IMR-90 (cell line): ENCODE measurements at regions of chr1 and their contacts with region 1.

Region 1: DNA sequence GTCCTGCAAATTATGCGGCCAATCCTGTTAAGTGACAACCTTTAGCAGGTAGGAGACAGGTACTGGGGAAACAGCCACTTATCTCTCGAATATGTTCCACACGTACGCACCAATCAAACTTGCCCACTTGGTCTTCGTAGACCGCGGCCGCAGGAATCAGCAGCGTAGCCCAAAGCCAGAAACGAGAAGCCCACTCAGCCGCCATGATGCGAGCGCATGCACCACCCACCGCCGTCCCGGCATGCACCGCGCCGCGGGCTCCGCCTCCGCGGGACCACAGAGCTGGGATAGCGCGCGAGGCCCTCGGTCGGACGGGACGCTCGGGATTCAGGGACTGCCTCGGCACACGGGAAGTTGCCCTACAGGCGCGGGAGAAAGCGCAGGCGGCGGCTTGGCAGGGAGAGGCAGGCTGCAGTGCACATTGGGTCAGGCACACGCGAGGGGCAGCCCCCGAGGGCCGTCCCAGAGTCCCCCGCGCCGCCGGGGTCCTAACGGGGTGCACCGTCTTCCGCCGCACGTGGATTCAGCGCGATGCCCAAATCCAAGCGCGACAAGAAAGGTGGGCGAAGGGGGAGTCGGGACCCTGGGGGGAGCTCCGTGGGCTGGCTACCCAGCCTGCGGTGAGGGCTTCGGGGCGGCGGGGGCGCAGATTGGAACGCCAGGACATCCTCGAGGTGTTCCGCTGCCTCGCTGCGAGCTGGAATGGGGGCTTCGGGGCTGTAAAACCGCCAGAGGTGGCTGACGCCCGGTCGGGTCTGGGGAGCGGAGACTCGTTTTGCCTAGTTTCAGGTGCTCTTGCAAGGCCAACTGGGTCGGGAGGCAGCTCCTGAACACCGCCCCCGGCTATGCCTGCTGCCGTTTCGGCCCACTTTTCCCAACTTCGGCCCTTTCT is at the starts of genes EMC1 and MRTO4:
- DNase-seq: peak; percentile 73
- ATAC-seq: peak; percentile 97
- H3K4me3 ChIP-seq: peak within 1 kb of the TSS; percentile 87
- H3K27ac ChIP-seq: peak within 1 kb of the TSS; percentile 96
- H3K4me1 ChIP-seq: 0 out of 2 replicates have a peak, but pooled peaks cover 2% of the 10 kb centered on the region
- H3K27me3 ChIP-seq: no peaks in the 10 kb centered on the region
- CTCF ChIP-seq: no peak
- POLR2A ChIP-seq: peak; percentile 92
- RAD21 ChIP-seq: no peak
- total RNA-seq, gene EMC1: 55.3 and 65.4 TPM in 2 replicates
- total RNA-seq, gene MRTO4: 58.0 and 58.1 TPM in 2 replicates

Region 2: GRCh38 chr1:19651141-19651737 is 399.7 kb after region 1 on chr1:
- CTCF ChIA-PET with region 1: no interaction called
- POLR2A ChIA-PET with region 1: no interaction called
- dilution Hi-C with region 1: no loop called
- in situ Hi-C with region 1: loop called (anchors 5 kb)
- intact Hi-C with region 1: loop called (anchors 5 kb)
- DNase-seq: peak; percentile 47
- ATAC-seq: peak; percentile 88
- H3K4me3 ChIP-seq: no peak overlapping the region
- H3K27ac ChIP-seq: no peak overlapping the region
- H3K4me1 ChIP-seq: peaks cover 12% of the 10 kb centered on the region; the same call in 1 of the 2 replicates
- H3K27me3 ChIP-seq: no peaks in the 10 kb centered on the region
- CTCF ChIP-seq: peak; percentile 84
- POLR2A ChIP-seq: no peak
- RAD21 ChIP-seq: peak; percentile 91